Naive thymus-derived CD4-positive, alpha-beta T cell (primary cell): ENCODE measurements at regions of chr19 and their contacts with region 1.

Region 1: DNA sequence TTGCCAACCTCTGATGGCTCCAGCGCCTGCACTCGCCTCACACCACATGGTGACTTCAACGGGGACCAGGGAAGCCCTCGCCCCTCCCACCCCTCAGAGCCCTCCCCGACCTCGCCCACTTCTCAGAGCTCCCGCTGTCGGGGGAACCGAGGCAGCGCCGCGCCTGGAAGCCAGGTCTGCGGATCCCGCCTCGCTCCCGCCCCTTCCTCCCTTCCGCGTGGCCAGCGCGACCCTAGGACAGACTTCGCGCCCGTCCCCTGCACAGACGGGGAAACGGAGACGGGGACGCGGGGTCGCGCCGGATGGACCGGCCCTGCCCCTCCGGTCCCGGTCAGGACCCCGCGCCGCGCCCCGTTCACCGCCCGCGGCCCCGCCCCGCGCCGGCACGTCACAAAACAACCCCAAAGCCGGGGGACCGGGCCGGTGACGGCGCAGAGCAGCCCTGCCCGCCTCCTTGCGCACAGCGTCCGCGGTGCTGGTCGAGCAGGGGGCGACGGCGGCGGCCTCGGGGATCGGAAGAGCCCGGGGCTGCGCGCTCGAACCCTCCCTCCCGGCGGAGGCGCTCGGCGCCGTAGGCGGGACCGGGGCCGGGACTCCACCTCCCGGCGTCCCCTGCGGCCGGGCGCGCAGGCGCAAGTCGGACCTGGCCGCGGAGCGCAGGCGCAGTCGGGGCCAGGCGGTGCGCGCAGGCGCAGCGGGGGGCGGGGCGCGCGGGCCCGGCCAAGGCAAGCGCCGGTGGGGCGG is 379 bp upstream of the CDC34 start:
- DNase-seq: peak; percentile 79 to 100 (median 94)
- ATAC-seq: peak; percentile 87
- H3K4me3 ChIP-seq: peak overlapping the region; percentile 72
- H3K4me3 Mint-ChIP-seq: peak overlapping the region; percentile 64 to 93 (median 82)
- H3K27ac ChIP-seq: peak overlapping the region; percentile 90
- H3K27ac Mint-ChIP-seq: peak overlapping the region in 8 of 9 donors; percentile 19 to 87 (median 80)
- H3K4me1 ChIP-seq: peaks cover 8 to 9% of the 10 kb centered on the region in 2 donors
- H3K4me1 Mint-ChIP-seq: peaks cover 8 to 32% (median 16%) of the 10 kb centered on the region in 7 donors
- H3K27me3 ChIP-seq: no peaks in the 10 kb centered on the region
- H3K27me3 Mint-ChIP-seq: peaks cover 0 to 4% (median 0%) of the 10 kb centered on the region in 5 donors

Region 2: GRCh38 chr19:488505-489417 is 42.4 kb before region 1 on chr19:
- CTCF ChIA-PET with region 1: no interaction called
- POLR2A ChIA-PET with region 1: no interaction called
- intact Hi-C with region 1: loop called in 1 of 2 experiments (anchors 1 kb)
- DNase-seq: peak; percentile 88 to 95 (median 92)
- ATAC-seq: peak; percentile 97
- H3K4me3 ChIP-seq: peak overlapping the region; percentile 62
- H3K4me3 Mint-ChIP-seq: peak overlapping the region; percentile 65 to 87 (median 81)
- H3K27ac ChIP-seq: peak overlapping the region; percentile 96
- H3K27ac Mint-ChIP-seq: peak overlapping the region in 8 of 9 donors; percentile 69 to 88 (median 75)
- H3K4me1 ChIP-seq: peaks cover 0 to 5% of the 10 kb centered on the region in 2 donors
- H3K4me1 Mint-ChIP-seq: peaks cover 3 to 14% (median 9%) of the 10 kb centered on the region in 7 donors
- H3K27me3 ChIP-seq: no peaks in the 10 kb centered on the region
- H3K27me3 Mint-ChIP-seq: peaks cover 0 to 19% (median 11%) of the 10 kb centered on the region in 5 donors

Region 3: DNA sequence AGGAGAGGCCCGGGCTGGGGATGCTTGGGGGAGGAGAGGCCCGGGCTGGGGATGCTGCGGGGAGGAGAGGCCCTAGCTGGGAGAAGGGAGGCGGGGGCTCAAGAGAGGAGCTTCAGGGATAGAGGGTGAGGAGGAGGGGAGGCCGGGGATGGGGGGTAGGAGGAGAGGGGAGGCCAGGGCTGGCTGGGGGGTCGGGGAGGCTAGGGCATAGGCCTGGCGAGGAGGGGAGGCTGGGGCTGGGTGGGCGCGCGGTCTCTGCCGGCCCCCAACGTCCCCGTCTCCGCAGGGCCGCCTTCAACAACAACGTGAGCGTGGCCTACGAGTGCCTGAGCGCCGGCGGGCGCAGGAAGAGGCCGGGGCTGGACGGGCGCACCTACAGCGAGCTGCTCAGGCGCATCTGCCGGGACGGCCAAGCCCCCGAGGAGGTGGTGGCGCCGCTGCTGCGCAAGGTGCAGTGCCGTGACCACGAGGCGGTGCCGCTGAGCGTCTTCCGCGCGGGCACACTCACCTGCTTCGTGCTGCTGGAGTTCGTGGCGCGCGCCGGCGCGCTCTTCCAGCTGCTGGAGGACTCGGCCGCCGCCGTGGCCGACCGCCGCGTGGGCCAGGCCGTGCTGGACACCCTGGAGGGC is 12.5 kb before region 1 on chr19:
- CTCF ChIA-PET with region 1: interaction called, 14 read pairs
- POLR2A ChIA-PET with region 1: interaction called, 16 read pairs
- intact Hi-C with region 1: loop called in 1 of 2 experiments (anchors 1 kb)
- DNase-seq: peak in 8 of 9 donors; percentile 53 to 74 (median 66)
- ATAC-seq: peak; percentile 92
- H3K4me3 ChIP-seq: no peak overlapping the region
- H3K4me3 Mint-ChIP-seq: peak overlapping the region in 4 of 10 donors; percentile 35 to 63 (median 40)
- H3K27ac ChIP-seq: peak overlapping the region; percentile 45
- H3K27ac Mint-ChIP-seq: peak overlapping the region in 2 of 9 donors; percentile 32 to 67
- H3K4me1 ChIP-seq: no peaks in the 10 kb centered on the region
- H3K4me1 Mint-ChIP-seq: peaks cover 5 to 31% (median 19%) of the 10 kb centered on the region in 7 donors
- H3K27me3 ChIP-seq: no peaks in the 10 kb centered on the region
- H3K27me3 Mint-ChIP-seq: no peaks in the 10 kb centered on the region

Region 4: DNA sequence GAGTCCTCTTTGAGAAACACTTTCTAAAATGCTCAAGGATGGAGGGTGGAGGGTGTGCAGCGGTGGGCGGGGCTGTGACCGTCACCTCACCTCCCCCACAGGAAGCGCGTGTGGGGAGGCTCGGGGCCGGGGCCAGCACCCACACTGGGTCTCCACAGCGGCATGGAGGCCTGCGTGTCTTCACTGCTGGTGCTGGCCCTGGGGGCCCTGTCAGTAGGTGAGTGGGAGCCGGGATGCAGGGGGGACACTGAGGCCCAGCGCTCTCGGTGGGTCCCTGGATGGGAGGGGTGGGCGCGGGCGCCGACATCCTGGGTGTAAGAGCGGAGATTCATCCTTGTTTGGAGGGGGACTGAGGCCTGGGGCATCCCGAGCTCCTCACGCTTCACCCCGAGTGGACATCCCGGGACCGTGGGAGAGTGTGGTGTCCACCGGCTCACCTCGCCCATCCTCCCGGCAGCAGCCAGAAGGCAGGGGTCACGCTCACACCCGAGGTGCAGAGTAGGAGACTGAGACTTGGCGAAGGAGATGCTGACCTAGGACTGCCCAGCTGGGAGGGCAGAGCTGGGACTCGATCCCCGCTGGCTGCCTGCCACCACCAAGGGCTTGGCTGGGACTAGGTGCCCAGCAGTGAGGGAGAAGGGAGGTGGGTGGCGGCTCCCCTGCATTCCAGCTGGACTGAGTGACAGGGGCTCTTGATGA is 12.9 kb after region 1 on chr19 and contains the start of gene GZMM:
- CTCF ChIA-PET with region 1: interaction called, 5 read pairs
- POLR2A ChIA-PET with region 1: interaction called, 5 read pairs
- intact Hi-C with region 1: loop called in 1 of 2 experiments (anchors 1 kb)
- DNase-seq: peak; percentile 63 to 86 (median 82)
- ATAC-seq: peak; percentile 98
- H3K4me3 ChIP-seq: peak within 1 kb of the TSS; percentile 70
- H3K4me3 Mint-ChIP-seq: peak within 1 kb of the TSS; percentile 81 to 94 (median 90)
- H3K27ac ChIP-seq: peak within 1 kb of the TSS; percentile 88
- H3K27ac Mint-ChIP-seq: peak within 1 kb of the TSS; percentile 77 to 97 (median 91)
- H3K4me1 ChIP-seq: peaks cover 5 to 10% of the 10 kb centered on the region in 2 donors
- H3K4me1 Mint-ChIP-seq: peaks cover 4 to 24% (median 21%) of the 10 kb centered on the region in 7 donors
- H3K27me3 ChIP-seq: no peaks in the 10 kb centered on the region
- H3K27me3 Mint-ChIP-seq: no peaks in the 10 kb centered on the region
- total RNA-seq, gene GZMM: 30.0 to 81.4 (median 67.8) TPM

Region 5: GRCh38 chr19:633068-633785 is 102.0 kb after region 1 on chr19 and contains the start of gene POLRMT:
- CTCF ChIA-PET with region 1: no interaction called
- POLR2A ChIA-PET with region 1: interaction called, 4 read pairs
- intact Hi-C with region 1: loop called in 1 of 2 experiments (anchors 1 kb)
- DNase-seq: peak; percentile 87 to 99 (median 96)
- ATAC-seq: peak; percentile 99
- H3K4me3 ChIP-seq: peak within 1 kb of the TSS; percentile 91
- H3K4me3 Mint-ChIP-seq: peak within 1 kb of the TSS; percentile 92 to 99 (median 97)
- H3K27ac ChIP-seq: peak within 1 kb of the TSS; percentile 78
- H3K27ac Mint-ChIP-seq: peak within 1 kb of the TSS; percentile 89 to 97 (median 93)
- H3K4me1 ChIP-seq: peaks cover 6 to 13% of the 10 kb centered on the region in 2 donors
- H3K4me1 Mint-ChIP-seq: peaks cover 13 to 41% (median 24%) of the 10 kb centered on the region in 7 donors
- H3K27me3 ChIP-seq: no peaks in the 10 kb centered on the region
- H3K27me3 Mint-ChIP-seq: no peaks in the 10 kb centered on the region
- total RNA-seq, gene POLRMT: 61.2 to 105 (median 71.3) TPM

Region 6: GRCh38 chr19:639253-640160 is 108.3 kb after region 1 on chr19 and contains the start of gene FGF22:
- CTCF ChIA-PET with region 1: no interaction called
- POLR2A ChIA-PET with region 1: no interaction called
- intact Hi-C with region 1: loop called in 1 of 2 experiments (anchors 1 kb)
- DNase-seq: peak; percentile 84 to 95 (median 91)
- ATAC-seq: peak; percentile 97
- H3K4me3 ChIP-seq: peak within 1 kb of the TSS; percentile 55
- H3K4me3 Mint-ChIP-seq: peak within 1 kb of the TSS; percentile 76 to 92 (median 84)
- H3K27ac ChIP-seq: peak within 1 kb of the TSS; percentile 64
- H3K27ac Mint-ChIP-seq: peak within 1 kb of the TSS; percentile 78 to 95 (median 89)
- H3K4me1 ChIP-seq: peaks cover 10 to 15% of the 10 kb centered on the region in 2 donors
- H3K4me1 Mint-ChIP-seq: peaks cover 5 to 13% (median 6%) of the 10 kb centered on the region in 7 donors
- H3K27me3 ChIP-seq: no peaks in the 10 kb centered on the region
- H3K27me3 Mint-ChIP-seq: peaks cover 0 to 3% (median 0%) of the 10 kb centered on the region in 5 donors
- total RNA-seq, gene FGF22: 0.17 to 1.8 (median 0.95) TPM in 4 of 5 experiments, not detected in the other